ENCODE measurements at regions of chr1 and their contacts with region 1.

Region 1: GRCh38 chr1:39892601-39893595 is 8.8 kb downstream of the MYCL start:
- DNase-seq: peak; percentile 77
- H3K4me3 Mint-ChIP-seq: peak overlapping the region; percentile 26
- H3K27ac Mint-ChIP-seq: peak overlapping the region; percentile 66
- H3K4me1 Mint-ChIP-seq: peaks cover 22% of the 10 kb centered on the region
- H3K27me3 Mint-ChIP-seq: no peaks in the 10 kb centered on the region
- CTCF ChIP-seq: no peak

Region 2: DNA sequence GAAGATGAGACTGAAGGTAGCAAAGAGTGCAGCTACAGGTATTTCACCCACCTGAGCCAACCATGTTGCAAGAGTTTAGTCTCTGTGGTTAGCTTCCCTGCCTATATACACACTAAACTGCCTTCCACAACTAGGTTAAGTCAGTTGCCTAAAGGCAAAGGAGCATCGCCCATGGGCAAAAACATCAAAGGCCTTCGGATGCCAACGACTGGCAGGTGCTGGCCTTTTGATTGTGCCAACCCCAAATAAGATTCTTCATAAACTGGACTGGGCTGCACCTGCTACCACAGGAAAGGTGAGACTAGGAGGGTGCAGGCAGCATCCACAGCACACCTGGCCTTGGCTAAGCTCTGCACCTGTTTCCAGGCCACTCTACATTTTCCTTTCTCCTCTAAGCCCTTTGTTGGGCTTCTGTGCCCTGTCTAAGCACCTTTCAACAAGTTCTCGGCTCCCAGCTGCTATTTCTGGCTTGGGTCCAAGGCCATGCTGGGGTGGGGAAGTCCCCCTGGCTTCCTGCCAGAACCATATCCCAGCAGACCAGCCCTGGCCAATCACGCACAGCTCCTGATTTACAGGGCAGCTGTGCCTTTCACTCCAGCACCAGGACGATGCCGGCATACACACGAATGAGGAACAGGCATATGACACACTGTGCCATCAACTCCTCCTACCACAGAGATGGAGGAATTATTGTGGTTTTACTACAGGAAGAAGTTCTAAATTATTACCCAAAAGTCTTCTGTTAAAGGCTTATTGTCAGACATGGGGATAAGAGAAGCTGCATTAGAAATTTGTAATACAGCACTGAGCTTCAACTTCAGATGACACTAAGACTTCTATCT is 47.4 kb before region 1 on chr1:
- CTCF ChIA-PET with region 1: no interaction called
- POLR2A ChIA-PET with region 1: interaction called, 15 read pairs
- intact Hi-C with region 1: no loop called
- DNase-seq: peak; percentile 89
- H3K4me3 Mint-ChIP-seq: no peak overlapping the region
- H3K27ac Mint-ChIP-seq: no peak overlapping the region
- H3K4me1 Mint-ChIP-seq: peaks cover 14% of the 10 kb centered on the region
- H3K27me3 Mint-ChIP-seq: no peaks in the 10 kb centered on the region
- CTCF ChIP-seq: no peak

Region 3: DNA sequence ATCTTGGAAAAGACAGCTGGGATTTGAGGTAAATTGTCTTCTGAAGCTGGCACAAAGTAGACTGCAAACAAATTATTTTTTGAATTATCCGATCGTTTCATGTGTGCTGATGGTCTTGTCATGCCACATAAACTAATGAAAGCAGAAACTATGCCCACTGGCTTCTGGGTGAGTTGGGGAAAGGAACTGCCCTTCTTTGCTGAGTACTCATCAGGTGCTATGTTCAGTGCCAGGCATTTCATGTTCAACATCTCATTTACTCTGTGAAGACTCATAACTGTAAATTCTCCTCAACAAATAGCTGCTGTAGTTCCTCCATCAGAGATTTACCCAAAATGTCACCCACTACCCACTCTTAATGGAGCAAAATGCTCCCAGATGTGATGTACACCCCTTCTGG is 10.7 kb before region 1 on chr1:
- CTCF ChIA-PET with region 1: interaction called, 7 read pairs
- POLR2A ChIA-PET with region 1: interaction called, 47 read pairs
- intact Hi-C with region 1: no loop called
- DNase-seq: no peak
- H3K4me3 Mint-ChIP-seq: peak overlapping the region; percentile 82
- H3K27ac Mint-ChIP-seq: peak overlapping the region; percentile 78
- H3K4me1 Mint-ChIP-seq: peaks cover 28% of the 10 kb centered on the region
- H3K27me3 Mint-ChIP-seq: no peaks in the 10 kb centered on the region
- CTCF ChIP-seq: no peak

Region 4: DNA sequence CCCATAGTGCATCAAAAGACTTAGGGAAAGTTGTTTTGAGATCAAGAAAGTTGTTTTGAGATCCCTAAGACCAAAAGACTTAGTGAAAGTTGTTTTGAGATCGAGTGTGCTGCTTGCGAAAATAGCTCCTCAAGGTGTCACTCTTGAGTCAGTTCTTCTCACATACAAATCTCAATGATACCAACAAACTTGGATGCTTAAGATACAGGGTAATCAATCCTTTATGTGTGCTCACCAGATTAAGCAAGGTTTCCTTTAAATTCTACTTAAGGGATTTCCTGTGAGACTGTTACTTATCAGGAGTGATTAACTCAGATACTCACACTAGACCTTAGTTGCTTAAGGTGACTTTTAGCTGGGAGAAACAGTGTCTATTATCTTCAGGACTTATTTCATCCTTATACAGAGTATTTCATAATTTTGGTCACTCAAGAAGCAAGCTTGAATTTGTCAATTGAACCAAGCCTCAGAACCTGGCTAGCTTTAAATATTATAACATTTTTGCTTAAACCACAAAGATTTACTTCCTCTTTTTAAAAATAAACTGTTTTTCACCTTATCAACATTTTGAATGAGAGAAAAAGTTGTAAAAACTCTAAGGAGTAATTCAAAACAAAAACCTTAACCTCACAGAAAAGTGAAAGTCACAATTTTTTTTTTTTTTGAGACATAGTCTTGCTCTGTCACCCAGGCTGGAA is 260.3 kb after region 1 on chr1:
- CTCF ChIA-PET with region 1: no interaction called
- POLR2A ChIA-PET with region 1: no interaction called
- intact Hi-C with region 1: no loop called
- DNase-seq: peak; percentile 61
- H3K4me3 Mint-ChIP-seq: no peak overlapping the region
- H3K27ac Mint-ChIP-seq: no peak overlapping the region
- H3K4me1 Mint-ChIP-seq: peaks cover 8% of the 10 kb centered on the region
- H3K27me3 Mint-ChIP-seq: peaks cover 13% of the 10 kb centered on the region
- CTCF ChIP-seq: peak; percentile 57

Measured in MCF 10A (cell line).